ENCODE measurements at regions of chr17 and their contacts with region 1.

Region 1: GRCh38 chr17:70622368-70623260 is 453.3 kb downstream of the KCNJ2 start:
- DNase-seq: no peak
- ATAC-seq: peak; percentile 72

Region 2: DNA sequence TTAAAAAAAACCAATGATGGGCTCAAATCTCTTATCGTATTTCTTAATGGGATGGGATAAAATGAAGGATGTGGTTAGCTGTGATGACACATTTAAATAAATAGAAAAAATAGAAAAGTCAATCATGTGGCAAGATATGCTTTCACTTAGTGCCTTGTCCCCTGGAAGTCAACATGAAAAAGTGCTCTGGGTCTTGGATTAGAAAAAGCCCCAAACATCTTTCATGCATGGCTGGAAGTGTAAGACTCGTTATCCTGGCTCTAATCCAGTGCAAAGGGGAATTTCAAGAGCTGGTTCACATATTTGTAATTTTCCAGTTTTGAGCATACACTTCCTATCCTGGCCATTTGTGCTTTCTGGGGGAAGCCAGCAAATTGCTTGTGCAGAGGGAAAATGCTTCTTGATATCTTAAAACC is 1047.3 kb before region 1 on chr17:
- intact Hi-C with region 1: loop called (anchors 1 kb)
- DNase-seq: no peak
- ATAC-seq: peak; percentile 23

Region 3: DNA sequence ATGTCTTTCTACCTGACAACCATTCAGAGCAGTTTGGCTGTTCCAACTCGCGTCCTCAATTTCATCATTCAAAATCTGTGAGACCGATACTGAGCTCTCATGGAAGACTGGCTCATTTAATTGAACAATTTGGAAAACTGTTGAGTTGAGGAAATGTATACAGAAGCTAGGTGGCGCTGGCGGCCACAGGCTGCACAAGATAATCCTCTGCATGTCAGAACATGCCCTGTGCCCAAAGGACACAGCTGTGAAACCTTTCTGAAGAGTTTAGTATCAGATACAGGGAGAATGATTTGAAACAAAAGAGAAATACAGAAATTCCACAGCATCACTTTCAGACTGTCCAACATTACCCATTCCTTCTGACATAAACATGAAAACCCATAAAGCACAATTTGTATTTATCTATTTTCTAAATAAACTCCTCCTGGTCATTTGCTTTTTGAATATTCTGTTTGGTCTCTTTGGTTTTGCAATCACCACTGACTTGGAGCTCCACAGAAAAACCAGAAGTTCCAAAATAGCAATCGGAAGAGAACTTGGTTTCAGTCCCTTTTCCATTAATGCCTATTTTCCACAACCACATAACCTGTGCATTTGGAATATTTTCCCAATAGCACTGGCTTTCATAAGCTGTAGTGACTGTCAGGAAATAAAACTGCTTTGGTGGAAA is 1015.3 kb before region 1 on chr17:
- intact Hi-C with region 1: loop called (anchors 5 kb)
- DNase-seq: peak; percentile 89
- ATAC-seq: peak; percentile 77

Region 4: DNA sequence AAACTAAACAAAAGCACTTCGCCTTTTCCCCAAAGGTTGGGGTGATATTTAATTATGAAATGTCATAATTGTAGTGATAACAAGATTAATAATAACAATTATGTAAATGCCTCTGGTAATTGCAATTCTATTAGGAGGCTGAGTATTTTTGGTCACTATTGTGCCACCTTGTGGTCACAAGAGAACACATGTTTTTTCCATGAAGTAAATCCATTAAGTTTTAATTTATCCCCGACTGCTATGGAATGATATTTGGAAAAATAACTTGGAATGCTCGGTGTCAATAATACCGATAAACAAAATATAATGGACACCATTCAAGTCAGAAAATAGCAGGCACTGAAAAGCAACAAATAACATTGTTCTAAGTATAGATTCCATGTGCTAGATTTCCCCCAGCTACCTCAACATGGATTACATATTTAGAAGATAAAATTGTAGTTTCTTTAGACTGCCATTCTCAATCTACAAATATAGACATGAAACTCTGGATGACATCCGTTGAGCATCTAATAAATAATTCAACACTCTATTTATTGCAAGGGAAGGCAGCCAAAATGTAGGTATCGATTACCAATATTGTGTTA is 478.3 kb before region 1 on chr17:
- intact Hi-C with region 1: loop called (anchors 5 kb)
- DNase-seq: no peak
- ATAC-seq: no peak